A673 (cell line): ENCODE measurements at regions of chr18 and their contacts with region 1.

Region 1: GRCh38 chr18:10405816-10406663 is 48.4 kb upstream of the APCDD1 start:
- DNase-seq: peak; percentile 52
- H3K4me3 ChIP-seq: no peak overlapping the region
- H3K27ac ChIP-seq: peak overlapping the region; percentile 9
- H3K4me1 ChIP-seq: peaks cover 54% of the 10 kb centered on the region
- H3K27me3 ChIP-seq: peaks cover 4% of the 10 kb centered on the region
- CTCF ChIP-seq: no peak

Region 2: GRCh38 chr18:10059610-10060468 is 346.2 kb before region 1 on chr18:
- CTCF ChIA-PET with region 1: no interaction called
- POLR2A ChIA-PET with region 1: no interaction called
- intact Hi-C with region 1: loop called (anchors 2 kb)
- DNase-seq: peak; percentile 65
- H3K4me3 ChIP-seq: no peak overlapping the region
- H3K27ac ChIP-seq: peak overlapping the region; percentile 88
- H3K4me1 ChIP-seq: peaks cover 58% of the 10 kb centered on the region
- H3K27me3 ChIP-seq: no peaks in the 10 kb centered on the region
- CTCF ChIP-seq: no peak

Region 3: DNA sequence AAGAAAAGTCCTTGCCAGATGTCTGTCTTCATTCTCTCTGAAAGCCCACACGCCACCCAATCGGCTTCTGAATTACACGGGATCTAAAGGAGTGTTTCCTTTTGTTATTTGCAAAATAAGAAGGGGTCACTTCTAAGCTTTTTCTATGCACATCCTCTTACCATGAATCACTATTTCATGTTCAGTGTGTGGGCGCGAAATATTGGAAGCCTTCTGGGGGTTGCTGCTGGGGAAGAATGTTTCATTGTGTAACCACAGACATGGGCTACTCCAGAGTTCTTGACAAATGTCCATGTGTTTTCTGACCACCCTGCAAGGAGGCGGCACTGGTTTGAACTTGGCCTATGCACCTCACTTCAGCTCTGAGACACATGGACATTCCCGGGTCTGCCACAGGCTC is 85.2 kb before region 1 on chr18:
- CTCF ChIA-PET with region 1: no interaction called
- POLR2A ChIA-PET with region 1: no interaction called
- intact Hi-C with region 1: no loop called
- DNase-seq: no peak
- H3K4me3 ChIP-seq: no peak overlapping the region
- H3K27ac ChIP-seq: no peak overlapping the region
- H3K4me1 ChIP-seq: peaks cover 6% of the 10 kb centered on the region
- H3K27me3 ChIP-seq: no peaks in the 10 kb centered on the region
- CTCF ChIP-seq: no peak

Region 4: DNA sequence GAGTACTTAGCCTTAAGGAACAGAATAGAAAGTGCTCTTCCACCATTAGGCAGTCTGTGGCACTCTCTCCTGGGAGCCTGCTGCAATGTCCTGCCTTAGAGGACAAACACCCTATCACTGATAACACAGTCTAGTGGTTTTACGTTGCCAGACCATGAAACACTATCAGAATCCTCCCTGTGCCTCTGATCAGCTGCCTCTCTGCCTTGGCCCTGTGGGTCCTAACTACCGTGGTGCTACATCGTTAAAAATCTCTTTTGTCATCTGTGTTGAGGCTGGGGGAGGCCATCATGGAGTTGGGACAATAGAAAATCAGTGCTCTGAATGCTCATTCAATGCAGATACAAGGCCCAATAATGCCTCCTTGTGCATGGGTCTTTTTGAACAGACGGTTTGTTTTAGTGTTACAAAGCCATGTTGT is 36.5 kb after region 1 on chr18:
- CTCF ChIA-PET with region 1: interaction called, 3 read pairs
- POLR2A ChIA-PET with region 1: no interaction called
- intact Hi-C with region 1: loop called (anchors 2 kb)
- DNase-seq: peak; percentile 42
- H3K4me3 ChIP-seq: no peak overlapping the region
- H3K27ac ChIP-seq: no peak overlapping the region
- H3K4me1 ChIP-seq: peaks cover 27% of the 10 kb centered on the region
- H3K27me3 ChIP-seq: peaks cover 28% of the 10 kb centered on the region
- CTCF ChIP-seq: peak; percentile 38; the same call in 1 of the 2 replicates

Region 5: GRCh38 chr18:10476338-10476791 is 70.3 kb after region 1 on chr18:
- CTCF ChIA-PET with region 1: no interaction called
- POLR2A ChIA-PET with region 1: no interaction called
- intact Hi-C with region 1: no loop called
- DNase-seq: peak; percentile 96
- H3K4me3 ChIP-seq: peak overlapping the region; percentile 14
- H3K27ac ChIP-seq: peak overlapping the region; percentile 100
- H3K4me1 ChIP-seq: peaks cover 89% of the 10 kb centered on the region
- H3K27me3 ChIP-seq: no peaks in the 10 kb centered on the region
- CTCF ChIP-seq: no peak

Region 6: DNA sequence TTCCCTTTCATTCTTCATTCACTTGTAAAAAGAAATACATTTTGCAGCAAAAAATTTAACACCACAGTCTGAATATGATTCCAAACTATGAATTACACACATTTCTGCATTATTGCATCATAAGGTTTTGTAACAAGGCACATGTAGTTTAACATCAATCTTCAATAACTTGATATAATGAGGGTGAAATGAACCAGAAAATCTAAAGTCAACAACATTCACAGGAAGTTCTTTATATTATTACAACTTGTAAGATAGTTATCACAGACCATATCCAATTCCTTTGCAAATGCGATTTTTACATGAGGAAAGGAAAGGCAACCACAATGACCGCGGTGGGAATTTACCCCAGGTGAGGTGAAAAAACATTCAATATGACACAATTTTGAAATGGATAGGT is 333.1 kb after region 1 on chr18:
- CTCF ChIA-PET with region 1: no interaction called
- POLR2A ChIA-PET with region 1: no interaction called
- intact Hi-C with region 1: no loop called
- DNase-seq: peak; percentile 17
- H3K4me3 ChIP-seq: no peak overlapping the region
- H3K27ac ChIP-seq: no peak overlapping the region
- H3K4me1 ChIP-seq: peaks cover 8% of the 10 kb centered on the region
- H3K27me3 ChIP-seq: peaks cover 8% of the 10 kb centered on the region
- CTCF ChIP-seq: no peak